Calu3 (cell line): ENCODE measurements at regions of chr12 and their contacts with region 1.

Region 1: DNA sequence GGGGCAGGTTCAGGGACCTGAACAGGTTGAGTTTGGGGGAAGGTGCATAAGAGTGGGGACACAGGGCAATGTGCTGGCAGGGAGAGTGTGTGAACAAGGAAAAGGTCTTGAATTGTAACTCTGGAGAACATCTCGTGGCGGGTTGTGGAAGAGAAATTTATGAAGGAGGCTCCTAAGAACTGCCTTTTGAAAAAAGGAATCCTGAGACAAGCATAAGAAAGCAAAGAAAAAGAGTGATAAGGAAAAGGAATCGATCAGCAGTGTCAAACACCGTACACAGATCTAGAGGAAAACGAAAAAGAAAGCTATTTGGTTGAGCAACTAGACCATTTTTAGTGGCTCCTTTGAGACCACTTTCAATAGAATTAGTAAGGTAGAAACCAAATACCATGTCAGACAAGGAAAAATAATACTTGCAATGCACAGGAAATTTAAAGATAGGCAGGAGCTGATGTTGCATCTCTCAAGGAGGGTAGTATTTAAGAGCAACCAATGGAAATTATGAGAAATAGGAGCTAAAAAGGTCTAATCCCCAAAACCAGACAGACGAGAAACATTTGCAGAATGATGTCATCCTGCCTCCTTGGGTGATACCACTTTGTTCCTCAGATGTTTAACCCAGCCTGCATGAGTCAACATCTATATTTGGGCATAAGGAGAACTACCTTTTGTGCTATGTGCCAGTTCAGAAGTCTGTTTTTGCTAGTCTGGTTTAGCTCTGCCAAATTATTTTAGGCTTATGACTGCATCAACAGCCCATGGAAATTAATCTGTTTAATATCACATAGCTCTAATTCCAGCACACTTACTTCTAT is 64.5 kb upstream of the STK38L start:
- DNase-seq: peak; percentile 67
- H3K4me3 Mint-ChIP-seq: peak overlapping the region; percentile 63
- H3K27ac Mint-ChIP-seq: peak overlapping the region; percentile 93
- H3K4me1 Mint-ChIP-seq: peaks cover 61% of the 10 kb centered on the region
- H3K27me3 Mint-ChIP-seq: no peaks in the 10 kb centered on the region
- CTCF ChIP-seq: no peak

Region 2: GRCh38 chr12:26723379-26724308 is 456.0 kb before region 1 on chr12:
- CTCF ChIA-PET with region 1: no interaction called
- intact Hi-C with region 1: no loop called
- DNase-seq: no peak
- H3K4me3 Mint-ChIP-seq: no peak overlapping the region
- H3K27ac Mint-ChIP-seq: no peak overlapping the region
- H3K4me1 Mint-ChIP-seq: peaks cover 29% of the 10 kb centered on the region
- H3K27me3 Mint-ChIP-seq: no peaks in the 10 kb centered on the region
- CTCF ChIP-seq: no peak

Region 3: DNA sequence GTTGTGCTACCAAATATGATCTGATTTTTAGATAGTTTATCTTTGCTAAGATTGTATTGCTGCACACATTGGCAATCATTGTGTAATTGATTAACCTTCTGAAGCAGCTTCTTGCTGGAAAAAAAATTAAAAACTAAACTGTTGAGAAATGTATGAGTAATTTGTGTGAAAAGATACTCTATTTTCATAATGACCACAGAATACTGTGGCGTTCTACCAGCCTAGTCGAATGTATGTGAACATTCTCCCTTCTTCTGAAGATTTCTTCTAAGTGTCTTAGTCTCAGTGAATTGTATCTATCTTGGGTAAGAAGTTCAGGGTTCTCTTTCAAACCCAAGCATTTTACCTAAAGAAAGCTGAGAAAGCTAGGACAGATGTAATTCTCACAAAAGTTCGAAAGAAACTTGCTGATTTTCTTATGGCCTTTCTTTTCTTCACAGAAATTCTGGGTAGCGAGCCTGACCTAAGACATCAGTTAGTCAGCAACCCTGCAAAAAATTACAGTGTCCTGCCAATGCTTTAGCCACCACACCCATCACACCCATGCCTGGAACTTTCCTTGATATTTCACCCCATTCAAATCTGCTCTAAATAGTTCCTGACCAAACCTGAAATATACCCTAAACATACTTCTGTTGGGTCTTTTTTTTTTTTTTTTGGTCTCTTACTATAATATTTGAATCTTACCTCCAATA is 70.1 kb before region 1 on chr12:
- CTCF ChIA-PET with region 1: no interaction called
- intact Hi-C with region 1: loop called (anchors 5 kb)
- DNase-seq: no peak
- H3K4me3 Mint-ChIP-seq: no peak overlapping the region
- H3K27ac Mint-ChIP-seq: no peak overlapping the region
- H3K4me1 Mint-ChIP-seq: peaks cover 23% of the 10 kb centered on the region
- H3K27me3 Mint-ChIP-seq: no peaks in the 10 kb centered on the region
- CTCF ChIP-seq: no peak

Region 4: GRCh38 chr12:27193854-27194544 is 14.4 kb after region 1 on chr12:
- CTCF ChIA-PET with region 1: interaction called, 10 read pairs
- intact Hi-C with region 1: no loop called
- DNase-seq: no peak
- H3K4me3 Mint-ChIP-seq: no peak overlapping the region
- H3K27ac Mint-ChIP-seq: no peak overlapping the region
- H3K4me1 Mint-ChIP-seq: peaks cover 25% of the 10 kb centered on the region
- H3K27me3 Mint-ChIP-seq: no peaks in the 10 kb centered on the region
- CTCF ChIP-seq: no peak